Activated CD4-positive, alpha-beta memory T cell treated with anti-CD3 and anti-CD28 coated beads for 36 hours (primary cell): ENCODE measurements at regions of chr7 and their contacts with region 1.

Region 1: GRCh38 chr7:30548762-30549344 is 44.2 kb upstream of the GGCT start:
- DNase-seq: peak; percentile 51
- H3K4me3 Mint-ChIP-seq: no peak overlapping the region
- H3K27ac Mint-ChIP-seq: no peak overlapping the region
- H3K4me1 Mint-ChIP-seq: no peaks in the 10 kb centered on the region
- H3K27me3 Mint-ChIP-seq: no peaks in the 10 kb centered on the region

Region 2: GRCh38 chr7:30531286-30531685 is 17.6 kb before region 1 on chr7:
- CTCF ChIA-PET with region 1: interaction called, 12 read pairs
- POLR2A ChIA-PET with region 1: no interaction called
- intact Hi-C with region 1: no loop called
- DNase-seq: no peak
- H3K4me3 Mint-ChIP-seq: no peak overlapping the region
- H3K27ac Mint-ChIP-seq: no peak overlapping the region
- H3K4me1 Mint-ChIP-seq: peaks cover 8% of the 10 kb centered on the region
- H3K27me3 Mint-ChIP-seq: no peaks in the 10 kb centered on the region